Activated CD4-positive, alpha-beta memory T cell treated with anti-CD3 and anti-CD28 coated beads, Interleukin-2, amount 10 ng/mL, durations not matched to agents 7 days and 5 days (primary cell): ENCODE measurements at regions of chr22 and their contacts with region 1.

Region 1: GRCh38 chr22:40679964-40680818 is 907 bp downstream of the MCHR1 start:
- DNase-seq: no peak
- H3K4me3 Mint-ChIP-seq: no peak overlapping the region
- H3K27ac Mint-ChIP-seq: no peak overlapping the region
- H3K4me1 Mint-ChIP-seq: peaks cover 30% of the 10 kb centered on the region
- H3K27me3 Mint-ChIP-seq: peaks cover 17% of the 10 kb centered on the region

Region 2: DNA sequence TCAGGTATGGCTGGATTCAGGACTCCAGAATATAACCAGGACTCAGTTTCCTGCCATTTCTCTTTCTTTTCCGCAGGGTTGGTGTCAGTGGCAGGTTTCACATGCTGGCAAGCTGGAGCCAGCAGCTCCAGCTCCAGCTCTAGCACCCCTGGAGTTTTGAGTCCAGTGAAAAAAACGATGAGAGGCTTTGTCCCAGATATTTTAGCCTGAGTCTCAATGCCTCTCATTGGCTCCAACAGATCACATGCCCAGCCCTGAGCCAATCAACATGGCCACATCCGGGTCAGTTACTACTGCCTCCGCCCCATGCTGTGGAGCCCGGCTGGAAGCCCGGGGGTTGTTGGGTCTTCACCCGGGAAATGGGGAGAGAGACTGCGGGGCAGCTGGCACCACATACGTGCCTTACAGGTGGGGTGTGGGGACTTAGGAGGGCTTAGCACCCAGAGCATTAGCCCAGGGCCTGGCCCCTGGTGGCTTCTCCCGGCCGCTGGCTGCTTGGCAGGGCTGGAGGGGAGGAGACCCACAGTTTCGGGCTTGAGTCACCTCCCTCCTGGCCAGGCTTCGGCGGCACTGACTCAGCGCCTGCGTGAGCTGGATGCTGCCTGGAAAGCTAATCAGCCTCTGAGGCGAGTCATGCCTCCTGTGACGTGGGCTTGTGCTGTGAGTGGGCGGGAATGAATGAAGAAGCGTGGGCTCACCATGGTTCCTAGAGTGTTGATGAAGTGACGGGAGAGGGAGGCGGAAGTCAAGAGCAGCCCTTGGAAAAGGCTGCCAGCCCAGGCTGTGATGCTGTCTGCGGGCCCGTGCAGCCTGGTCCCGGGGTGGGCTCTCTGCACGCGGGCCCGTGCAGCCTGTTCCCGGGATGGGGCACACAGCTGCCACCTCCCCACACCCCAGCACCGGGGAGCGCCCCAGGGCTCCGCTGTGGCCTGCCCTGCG is 28.4 kb before region 1 on chr22:
- CTCF ChIA-PET with region 1: interaction called, 14 read pairs
- POLR2A ChIA-PET with region 1: interaction called, 6 read pairs
- DNase-seq: peak; percentile 87
- H3K4me3 Mint-ChIP-seq: peak overlapping the region; percentile 72
- H3K27ac Mint-ChIP-seq: peak overlapping the region; percentile 83
- H3K4me1 Mint-ChIP-seq: peaks cover 29% of the 10 kb centered on the region
- H3K27me3 Mint-ChIP-seq: no peaks in the 10 kb centered on the region

Region 3: DNA sequence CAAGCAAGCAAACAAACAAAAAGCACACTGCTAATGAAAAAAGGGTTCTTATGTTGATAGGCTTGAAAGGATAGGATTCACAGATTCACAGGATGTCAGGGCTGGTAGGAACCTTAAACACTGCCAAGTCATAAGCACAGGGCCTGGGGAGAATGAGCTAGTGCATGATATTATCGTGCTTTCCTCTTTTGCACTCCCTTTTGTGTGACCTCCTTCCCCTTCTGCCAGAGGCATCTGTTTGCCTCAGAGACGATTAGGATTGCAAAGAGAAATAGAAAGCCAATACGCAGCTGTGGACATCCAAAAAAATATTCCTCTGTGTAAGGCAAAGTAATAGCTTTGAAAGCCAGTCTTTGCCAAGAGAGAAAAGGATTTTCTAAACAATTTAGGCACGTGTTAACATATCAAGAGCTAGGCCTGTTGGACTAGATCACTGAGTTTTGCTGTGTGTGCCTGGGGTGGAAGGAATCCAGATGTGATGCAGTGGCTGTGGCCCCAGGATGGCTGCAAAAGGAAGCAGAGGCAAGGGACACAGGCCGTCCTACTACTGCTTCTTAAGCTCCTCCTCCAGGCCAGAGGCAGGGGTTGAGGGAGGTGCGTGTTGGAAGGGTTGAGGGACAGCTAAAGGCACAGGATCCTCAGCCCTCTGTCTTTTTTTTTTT is 29.7 kb after region 1 on chr22:
- CTCF ChIA-PET with region 1: interaction called, 25 read pairs
- POLR2A ChIA-PET with region 1: interaction called, 15 read pairs
- DNase-seq: no peak
- H3K4me3 Mint-ChIP-seq: no peak overlapping the region
- H3K27ac Mint-ChIP-seq: no peak overlapping the region
- H3K4me1 Mint-ChIP-seq: peaks cover 21% of the 10 kb centered on the region
- H3K27me3 Mint-ChIP-seq: peaks cover 13% of the 10 kb centered on the region

Region 4: DNA sequence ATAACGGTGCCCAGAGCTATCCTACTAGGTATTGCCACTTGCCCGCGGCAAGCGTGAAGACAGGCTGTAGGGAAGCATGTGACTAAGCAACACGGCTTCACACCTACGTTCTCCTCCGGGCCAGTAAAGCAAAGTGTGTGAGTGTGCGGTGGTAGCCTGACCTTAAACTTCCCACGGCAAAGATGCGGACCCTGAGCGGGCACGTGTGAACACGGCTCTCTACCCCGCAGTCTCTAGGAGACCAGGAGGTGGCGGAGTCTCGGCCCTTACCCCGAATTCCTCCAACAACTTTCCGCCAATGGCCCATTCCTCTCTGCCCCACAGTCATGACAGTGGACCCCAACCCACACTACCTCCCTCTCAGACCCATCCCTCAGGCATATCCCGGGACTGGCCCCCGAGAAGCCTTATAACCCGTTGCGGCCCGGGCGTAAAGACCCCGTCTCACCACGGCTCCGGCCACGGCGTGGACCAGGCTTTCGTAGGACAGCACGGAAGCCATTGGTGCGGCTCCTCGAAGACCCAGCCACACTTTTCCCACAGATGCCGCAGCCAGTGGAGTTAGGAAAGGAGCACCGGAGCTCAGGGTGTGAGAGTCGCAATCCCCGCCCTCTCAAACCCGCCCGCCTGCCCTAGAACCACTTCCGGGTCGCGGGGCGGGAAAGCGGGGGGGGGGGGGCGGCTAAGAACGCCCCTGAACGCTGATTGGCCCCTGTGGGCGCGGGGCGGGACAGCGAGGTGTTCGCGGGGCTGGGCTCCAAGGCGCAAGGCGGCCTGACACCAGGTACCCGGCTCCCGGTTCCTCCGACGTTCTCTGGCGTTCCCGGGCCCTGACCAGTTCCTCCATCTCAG is 138.8 kb after region 1 on chr22 and contains the start of gene SLC25A17:
- CTCF ChIA-PET with region 1: interaction called, 22 read pairs
- POLR2A ChIA-PET with region 1: interaction called, 4 read pairs
- DNase-seq: peak; percentile 90
- H3K4me3 Mint-ChIP-seq: peak within 1 kb of the TSS; percentile 91
- H3K27ac Mint-ChIP-seq: peak within 1 kb of the TSS; percentile 88
- H3K4me1 Mint-ChIP-seq: peaks cover 32% of the 10 kb centered on the region
- H3K27me3 Mint-ChIP-seq: no peaks in the 10 kb centered on the region
- total RNA-seq, gene SLC25A17: 17.1 to 17.5 TPM

Region 5: GRCh38 chr22:40922484-40923303 is 242.5 kb after region 1 on chr22:
- CTCF ChIA-PET with region 1: interaction called, 15 read pairs
- POLR2A ChIA-PET with region 1: no interaction called
- DNase-seq: no peak
- H3K4me3 Mint-ChIP-seq: no peak overlapping the region
- H3K27ac Mint-ChIP-seq: peak overlapping the region; percentile 31
- H3K4me1 Mint-ChIP-seq: peaks cover 4% of the 10 kb centered on the region
- H3K27me3 Mint-ChIP-seq: no peaks in the 10 kb centered on the region